ENCODE measurements at regions of chrX and their contacts with region 1.

Region 1: GRCh38 chrX:41177297-41177696 is 92.1 kb downstream of the USP9X start:
- DNase-seq: no peak
- H3K4me3 ChIP-seq: no peak overlapping the region
- H3K27ac ChIP-seq: no peak overlapping the region
- H3K4me1 ChIP-seq: no peaks in the 10 kb centered on the region
- H3K27me3 ChIP-seq: no peaks in the 10 kb centered on the region
- CTCF ChIP-seq: no peak

Region 2: DNA sequence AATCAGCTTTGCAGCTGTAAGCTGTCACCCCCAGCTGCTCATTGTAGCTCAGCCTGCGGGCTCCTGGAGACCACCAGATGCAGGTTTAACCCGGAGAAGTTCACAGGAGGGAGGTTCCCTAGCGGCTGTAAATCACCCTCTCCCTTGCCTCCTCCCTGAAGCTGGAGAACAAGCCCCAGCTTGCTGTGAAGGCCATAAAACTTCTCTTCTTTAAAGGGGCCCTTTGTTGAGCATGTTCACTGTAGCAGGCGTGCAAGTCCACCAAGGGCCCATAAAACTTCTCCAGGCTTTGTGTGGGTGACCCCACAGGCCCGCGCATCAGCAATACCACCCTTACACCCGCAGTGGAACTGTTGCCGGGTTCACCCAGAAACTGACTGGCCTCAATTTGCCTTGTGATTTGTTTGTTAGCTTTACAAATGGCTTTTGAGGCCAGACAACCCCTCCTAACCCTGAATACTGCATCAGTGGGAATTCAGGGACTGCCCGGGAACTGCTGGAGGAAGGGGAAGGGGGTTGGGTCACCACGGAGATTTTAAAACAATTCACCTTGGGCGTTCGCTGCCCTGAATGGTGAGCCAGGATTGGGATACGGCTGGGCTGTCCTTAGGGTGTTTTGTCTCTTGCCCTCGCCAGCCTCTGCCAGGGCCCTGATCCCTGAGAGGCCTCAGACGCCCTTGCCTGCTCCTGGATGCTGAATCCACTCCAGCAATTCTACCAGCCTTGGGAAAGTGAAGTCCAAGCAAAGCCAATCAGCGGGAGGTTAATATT is 646.1 kb before region 1 on chrX:
- CTCF ChIA-PET with region 1: no interaction called
- POLR2A ChIA-PET with region 1: no interaction called
- intact Hi-C with region 1: no loop called
- DNase-seq: no peak
- H3K4me3 ChIP-seq: no peak overlapping the region
- H3K27ac ChIP-seq: no peak overlapping the region
- H3K4me1 ChIP-seq: no peaks in the 10 kb centered on the region
- H3K27me3 ChIP-seq: no peaks in the 10 kb centered on the region
- CTCF ChIP-seq: no peak

Region 3: DNA sequence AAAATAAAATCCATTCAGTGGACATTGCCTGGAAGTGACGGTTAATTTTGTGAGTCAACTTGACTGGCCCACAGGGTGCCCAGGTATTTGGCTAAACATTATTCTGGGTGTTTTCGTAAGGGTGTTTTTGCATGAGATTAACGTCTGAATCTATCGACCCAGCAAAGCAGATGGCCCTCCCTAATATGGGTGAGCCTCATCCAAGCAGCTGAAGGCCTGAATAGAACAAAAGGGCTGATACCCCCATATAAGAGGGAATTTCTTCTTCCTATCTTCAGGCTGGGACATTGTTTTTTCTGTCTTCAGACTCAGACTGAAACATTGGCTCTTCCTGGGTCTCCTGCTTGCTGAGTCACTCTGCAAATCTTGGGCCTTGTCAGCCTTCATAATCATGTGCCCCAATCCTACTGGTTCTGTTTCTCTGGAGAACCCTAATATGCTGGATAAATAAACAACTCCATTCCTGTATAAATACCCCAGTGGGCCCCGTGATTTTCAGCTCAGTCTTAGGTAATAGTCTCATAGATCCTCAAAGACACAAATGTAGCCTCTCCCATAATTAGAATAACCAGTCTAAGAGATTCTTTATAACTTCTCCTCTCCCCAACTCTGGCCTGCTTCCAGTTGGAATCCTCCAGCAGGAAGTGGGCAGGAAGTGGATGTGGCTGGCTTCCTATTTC is 123.6 kb after region 1 on chrX:
- CTCF ChIA-PET with region 1: interaction called, 12 read pairs
- POLR2A ChIA-PET with region 1: no interaction called
- intact Hi-C with region 1: no loop called
- DNase-seq: peak in 1 of 2 experiments; percentile 38
- H3K4me3 ChIP-seq: no peak overlapping the region
- H3K27ac ChIP-seq: peak overlapping the region; percentile 64
- H3K4me1 ChIP-seq: peaks cover 19% of the 10 kb centered on the region; the same call in 1 of the 2 replicates
- H3K27me3 ChIP-seq: no peaks in the 10 kb centered on the region
- CTCF ChIP-seq: no peak

Measured in PC-9 (cell line).